Activated CD8-positive, alpha-beta T cell treated with anti-CD3 and anti-CD28 coated beads, Interleukin-2, amount 10 ng/mL, durations not matched to agents 7 days and 5 days (primary cell): ENCODE measurements at regions of chr22 and their contacts with region 1.

Region 1: DNA sequence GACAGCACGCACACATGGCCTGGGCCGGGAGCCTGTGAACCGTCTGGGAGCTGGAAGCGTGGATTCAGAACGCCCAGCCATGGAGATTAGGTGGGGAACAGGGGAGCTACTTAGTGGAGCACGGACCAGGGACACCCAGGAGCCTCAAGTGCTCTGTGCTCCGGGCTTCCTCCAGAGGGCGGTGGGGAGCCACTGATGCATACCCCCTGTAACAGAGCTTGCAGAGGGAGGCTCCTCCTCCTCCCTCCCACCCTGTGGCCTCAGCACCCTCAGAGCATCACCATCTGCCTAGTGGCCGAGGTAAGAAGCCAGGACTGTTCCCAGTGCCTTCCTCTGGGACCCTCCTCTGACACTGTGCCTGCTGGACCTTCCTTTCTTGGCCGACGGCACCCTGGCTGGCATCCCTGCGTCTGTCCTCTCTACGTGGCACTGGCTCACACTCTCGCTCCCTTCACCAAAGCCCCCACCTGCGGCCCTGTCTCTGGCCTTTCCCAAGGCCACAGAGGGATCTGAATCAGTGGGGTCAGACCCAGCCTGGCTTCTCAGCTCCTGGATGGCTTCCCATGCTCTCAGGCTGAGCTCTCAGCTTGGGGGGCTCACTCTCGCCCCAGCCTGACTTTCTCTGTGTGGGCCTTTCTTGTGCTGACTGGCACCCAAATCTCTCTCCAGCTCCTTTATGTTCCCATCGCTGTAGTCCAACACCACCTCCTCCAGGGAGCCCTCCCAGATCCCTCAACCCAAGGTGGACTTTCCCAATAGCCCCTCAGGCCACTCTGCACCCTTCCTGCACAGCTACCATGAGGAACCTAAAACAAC is 780.9 kb downstream of the BRD1 start:
- DNase-seq: peak; percentile 36
- ATAC-seq: peak; percentile 60
- H3K4me3 Mint-ChIP-seq: no peak overlapping the region
- H3K27ac Mint-ChIP-seq: no peak overlapping the region
- H3K4me1 Mint-ChIP-seq: no peaks in the 10 kb centered on the region
- H3K27me3 Mint-ChIP-seq: no peaks in the 10 kb centered on the region

Region 2: GRCh38 chr22:49305214-49305909 is 258.6 kb after region 1 on chr22:
- CTCF ChIA-PET with region 1: interaction called, 14 read pairs
- POLR2A ChIA-PET with region 1: no interaction called
- DNase-seq: peak; percentile 64
- ATAC-seq: peak; percentile 80
- H3K4me3 Mint-ChIP-seq: no peak overlapping the region
- H3K27ac Mint-ChIP-seq: no peak overlapping the region
- H3K4me1 Mint-ChIP-seq: no peaks in the 10 kb centered on the region
- H3K27me3 Mint-ChIP-seq: peaks cover 2% of the 10 kb centered on the region